ENCODE measurements at regions of chr4 and their contacts with region 1.

Region 1: GRCh38 chr4:188941524-188942119 is 802.4 kb downstream of the TRIML1 start:
- DNase-seq: peak; percentile 96
- H3K4me3 ChIP-seq: no peak overlapping the region
- H3K27ac ChIP-seq: peak overlapping the region; percentile 79
- H3K27me3 ChIP-seq: no peaks in the 10 kb centered on the region
- CTCF ChIP-seq: no peak

Region 2: GRCh38 chr4:188986271-188986689 is 44.7 kb after region 1 on chr4:
- CTCF ChIA-PET with region 1: no interaction called
- POLR2A ChIA-PET with region 1: interaction called, 14 read pairs
- DNase-seq: peak; percentile 89
- H3K4me3 ChIP-seq: no peak overlapping the region
- H3K27ac ChIP-seq: no peak overlapping the region
- H3K27me3 ChIP-seq: no peaks in the 10 kb centered on the region
- CTCF ChIP-seq: no peak

Measured in AG04450 (cell line).